ENCODE measurements at regions of chr2 and their contacts with region 1.

Region 1: DNA sequence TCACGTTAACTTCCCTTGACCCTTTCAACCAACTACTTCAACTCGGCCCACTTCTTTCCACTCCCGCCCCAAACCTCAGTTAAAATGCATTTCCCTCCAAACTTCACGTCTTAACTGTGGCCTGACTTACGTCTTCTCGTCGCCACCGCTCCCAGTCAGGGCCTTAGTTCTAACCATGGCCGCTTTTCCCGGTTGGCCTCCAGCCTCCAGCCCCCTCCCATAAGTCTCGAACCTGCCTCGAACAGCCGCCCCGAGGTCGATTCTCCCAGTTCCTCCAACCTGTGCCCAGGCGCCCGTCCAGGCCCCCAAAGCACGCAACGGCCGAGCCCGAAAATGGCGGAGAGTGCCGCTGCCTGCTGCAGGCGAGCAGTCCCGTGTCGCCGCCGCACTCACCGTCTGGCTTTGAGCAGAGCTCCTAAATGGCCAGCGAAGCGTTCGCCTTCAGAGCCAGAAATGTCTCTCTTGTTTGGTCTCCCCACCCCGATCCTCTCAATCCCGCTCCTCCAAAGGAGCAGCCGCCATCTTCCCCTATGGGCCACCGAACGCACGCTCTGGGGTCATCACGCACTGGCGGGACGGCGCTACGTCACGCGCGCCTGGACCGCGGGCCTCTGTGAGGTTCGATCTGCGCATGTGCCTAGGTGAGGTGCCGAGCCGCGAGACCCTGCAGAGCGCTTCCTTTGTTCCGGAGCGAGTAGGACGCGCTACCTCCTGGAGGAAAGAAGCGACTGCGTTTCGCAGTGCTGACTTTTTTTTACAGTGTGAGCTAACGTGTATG is at the start of gene WDR33:
- DNase-seq: peak; percentile 97
- H3K4me3 Mint-ChIP-seq: peak within 1 kb of the TSS; percentile 94
- H3K27ac Mint-ChIP-seq: peak within 1 kb of the TSS; percentile 97
- H3K4me1 Mint-ChIP-seq: peaks cover 41% of the 10 kb centered on the region
- H3K27me3 Mint-ChIP-seq: no peaks in the 10 kb centered on the region
- total RNA-seq, gene WDR33: 61.1 to 63.2 TPM

Region 2: GRCh38 chr2:127387655-127388422 is 423.0 kb before region 1 on chr2 and contains the start of gene MAP3K2:
- CTCF ChIA-PET with region 1: no interaction called
- intact Hi-C with region 1: loop called (anchors 2 kb)
- DNase-seq: peak; percentile 92
- H3K4me3 Mint-ChIP-seq: peak within 1 kb of the TSS; percentile 85
- H3K27ac Mint-ChIP-seq: peak within 1 kb of the TSS; percentile 92
- H3K4me1 Mint-ChIP-seq: peaks cover 69% of the 10 kb centered on the region
- H3K27me3 Mint-ChIP-seq: no peaks in the 10 kb centered on the region
- total RNA-seq, gene MAP3K2: 27.1 to 27.4 TPM

Region 3: GRCh38 chr2:127649684-127650040 is 161.1 kb before region 1 on chr2:
- CTCF ChIA-PET with region 1: no interaction called
- intact Hi-C with region 1: loop called (anchors 2 kb)
- DNase-seq: peak; percentile 91
- H3K4me3 Mint-ChIP-seq: no peak overlapping the region
- H3K27ac Mint-ChIP-seq: no peak overlapping the region
- H3K4me1 Mint-ChIP-seq: peaks cover 13% of the 10 kb centered on the region
- H3K27me3 Mint-ChIP-seq: no peaks in the 10 kb centered on the region

Region 4: DNA sequence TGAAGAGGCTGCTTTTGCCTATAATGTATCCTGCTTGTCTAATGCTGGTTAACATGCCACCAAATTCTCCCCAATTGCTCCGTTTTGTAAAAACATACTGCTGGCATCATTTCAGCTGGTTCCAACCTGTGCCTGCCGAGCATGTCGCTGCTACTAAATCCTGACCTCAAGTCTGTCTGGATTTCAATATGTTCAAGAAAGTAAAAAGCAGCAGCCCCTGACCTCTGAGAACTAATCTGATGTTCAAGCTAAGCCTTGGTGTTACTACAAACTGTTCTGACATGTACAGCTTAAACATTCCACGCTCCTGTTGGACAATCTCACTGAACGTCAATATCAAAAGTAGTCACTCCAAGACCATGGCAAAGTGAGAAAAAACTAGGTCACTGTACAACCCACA is 63.2 kb before region 1 on chr2:
- CTCF ChIA-PET with region 1: no interaction called
- intact Hi-C with region 1: loop called (anchors 2 kb)
- DNase-seq: no peak
- H3K4me3 Mint-ChIP-seq: no peak overlapping the region
- H3K27ac Mint-ChIP-seq: no peak overlapping the region
- H3K4me1 Mint-ChIP-seq: peaks cover 25% of the 10 kb centered on the region
- H3K27me3 Mint-ChIP-seq: no peaks in the 10 kb centered on the region

Region 5: GRCh38 chr2:127857265-127857808 is 46.5 kb after region 1 on chr2:
- CTCF ChIA-PET with region 1: no interaction called
- intact Hi-C with region 1: loop called (anchors 1 kb)
- DNase-seq: peak; percentile 32
- H3K4me3 Mint-ChIP-seq: peak overlapping the region; percentile 99
- H3K27ac Mint-ChIP-seq: peak overlapping the region; percentile 91
- H3K4me1 Mint-ChIP-seq: peaks cover 53% of the 10 kb centered on the region
- H3K27me3 Mint-ChIP-seq: no peaks in the 10 kb centered on the region

Region 6: DNA sequence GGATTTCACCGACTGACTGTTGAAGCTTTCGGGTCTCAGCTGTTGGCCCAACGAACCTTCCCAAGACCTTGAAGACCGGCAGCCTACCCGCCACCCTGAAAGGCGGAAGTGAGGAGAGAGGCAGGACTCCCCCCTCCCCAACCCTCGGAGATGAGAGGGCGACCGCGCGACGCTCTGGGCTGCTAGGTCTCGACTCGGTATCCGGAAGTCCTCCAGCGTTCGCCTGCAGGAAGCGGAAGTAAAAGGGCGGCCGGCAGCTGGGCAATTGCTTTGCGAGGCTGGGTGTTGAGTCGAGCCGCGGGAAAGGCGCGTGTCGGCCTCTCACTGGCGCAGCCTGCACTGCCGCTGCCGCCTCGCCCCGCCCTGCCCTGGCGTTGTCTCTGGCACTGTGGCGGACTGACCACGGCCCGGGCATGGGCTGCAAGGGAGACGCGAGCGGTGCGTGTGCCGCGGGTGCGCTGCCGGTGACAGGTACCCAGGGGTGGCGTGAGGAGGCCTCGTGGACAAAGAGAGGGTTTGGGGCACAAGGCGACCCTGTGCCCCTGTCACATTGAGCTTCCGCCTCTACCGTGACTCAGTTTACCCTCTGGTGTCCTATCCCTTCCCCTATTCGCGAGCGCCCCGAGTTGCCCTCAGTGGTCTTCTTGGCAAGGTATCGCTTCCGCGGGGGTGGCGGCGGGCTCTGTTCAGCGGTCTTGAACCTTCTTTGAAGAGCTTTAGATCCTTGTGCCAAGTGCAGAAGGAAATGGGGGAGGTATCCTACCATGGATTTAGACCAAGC is 280.3 kb after region 1 on chr2 and contains the start of gene UGGT1:
- CTCF ChIA-PET with region 1: no interaction called
- intact Hi-C with region 1: loop called (anchors 1 kb)
- DNase-seq: peak; percentile 96
- H3K4me3 Mint-ChIP-seq: peak within 1 kb of the TSS; percentile 90
- H3K27ac Mint-ChIP-seq: peak within 1 kb of the TSS; percentile 86
- H3K4me1 Mint-ChIP-seq: peaks cover 42% of the 10 kb centered on the region
- H3K27me3 Mint-ChIP-seq: no peaks in the 10 kb centered on the region
- total RNA-seq, gene UGGT1: 37.3 to 40.1 TPM